ENCODE measurements at regions of chr11 and their contacts with region 1.

Region 1: DNA sequence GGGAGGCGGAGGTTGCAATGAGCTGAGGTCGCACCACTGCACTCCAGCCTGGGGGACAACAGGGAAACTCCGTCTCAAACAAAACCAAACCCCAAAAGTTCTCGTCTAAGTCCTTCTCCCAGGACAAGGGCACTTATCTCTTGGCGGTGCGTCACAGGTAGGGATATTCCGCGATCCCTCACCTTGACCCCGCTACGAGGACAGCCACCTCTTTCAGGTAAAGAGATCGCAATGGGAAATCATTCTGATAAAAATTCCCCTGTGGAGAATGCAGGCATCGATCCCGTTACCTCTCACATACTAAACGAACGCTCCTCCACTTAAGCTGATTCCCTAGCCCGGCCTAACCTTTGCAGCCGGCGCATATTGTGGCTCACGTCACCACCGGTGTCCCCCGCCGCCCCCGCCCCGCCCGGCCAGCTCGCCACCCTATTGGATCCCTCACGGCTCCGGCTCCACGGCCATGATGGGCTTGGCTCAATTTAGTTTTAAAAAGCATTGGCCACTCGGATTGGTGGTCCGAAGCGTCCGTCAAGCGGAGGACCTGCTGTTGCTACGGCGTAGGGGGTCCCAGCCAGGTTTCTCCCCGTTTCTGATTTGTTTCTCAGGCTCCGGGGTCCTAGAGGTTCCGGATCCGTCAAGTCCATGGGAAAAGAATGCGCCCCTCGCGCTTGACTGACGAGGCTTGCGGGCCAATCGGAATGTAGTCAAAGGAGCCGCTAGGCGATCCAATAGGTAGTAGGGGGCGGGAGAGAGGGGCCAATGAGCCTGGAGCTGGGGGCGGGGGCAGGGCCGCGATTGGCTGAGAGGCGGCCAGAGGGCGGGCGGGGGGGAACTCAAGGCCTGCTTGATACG is 439 bp upstream of the PPP6R3 start:
- DNase-seq: peak; percentile 97 to 99 (median 98)
- ATAC-seq: peak; percentile 93 to 96 (median 94)
- H3K4me3 ChIP-seq: peak overlapping the region; percentile 71 to 99 (median 94)
- H3K27ac ChIP-seq: peak overlapping the region; percentile 91 to 99 (median 96)
- H3K4me1 ChIP-seq: peaks cover 2 to 42% (median 36%) of the 10 kb centered on the region in 12 donors
- H3K27me3 ChIP-seq: no peaks in the 10 kb centered on the region
- CTCF ChIP-seq: no peak
- POLR2A ChIP-seq: no peak

Region 2: GRCh38 chr11:68297812-68298658 is 162.1 kb before region 1 on chr11:
- intact Hi-C with region 1: loop called in 1 of 10 experiments (anchors 5 kb)
- DNase-seq: peak; percentile 77 to 92 (median 80)
- ATAC-seq: peak; percentile 93 to 97 (median 96)
- H3K4me3 ChIP-seq: peak overlapping the region in 5 of 12 donors; percentile 3 to 28 (median 10)
- H3K27ac ChIP-seq: no peak overlapping the region
- H3K4me1 ChIP-seq: peaks cover 0 to 22% (median 12%) of the 10 kb centered on the region in 12 donors
- H3K27me3 ChIP-seq: no peaks in the 10 kb centered on the region
- CTCF ChIP-seq: peak in 11 of 12 donors; percentile 94 to 99 (median 98)
- POLR2A ChIP-seq: no peak

Region 3: GRCh38 chr11:68506908-68507307 is 46.8 kb after region 1 on chr11:
- intact Hi-C with region 1: loop called in 2 of 10 experiments (anchors 5 kb)
- DNase-seq: no peak
- ATAC-seq: no peak
- H3K4me3 ChIP-seq: no peak overlapping the region
- H3K27ac ChIP-seq: no peak overlapping the region
- H3K4me1 ChIP-seq: peaks cover 0 to 85% (median 73%) of the 10 kb centered on the region in 12 donors
- H3K27me3 ChIP-seq: no peaks in the 10 kb centered on the region
- CTCF ChIP-seq: peak in 1 of 12 donors; percentile 5
- POLR2A ChIP-seq: no peak

Region 4: GRCh38 chr11:68528630-68529029 is 68.5 kb after region 1 on chr11:
- intact Hi-C with region 1: loop called in 3 of 10 experiments (anchors 5 to 10 kb)
- DNase-seq: no peak
- ATAC-seq: peak; percentile 35 to 45 (median 39)
- H3K4me3 ChIP-seq: no peak overlapping the region
- H3K27ac ChIP-seq: peak overlapping the region in 3 of 12 donors; percentile 3 to 33 (median 8)
- H3K4me1 ChIP-seq: peaks cover 0 to 84% (median 48%) of the 10 kb centered on the region in 12 donors
- H3K27me3 ChIP-seq: no peaks in the 10 kb centered on the region
- CTCF ChIP-seq: no peak
- POLR2A ChIP-seq: no peak

Region 5: GRCh38 chr11:68542617-68543016 is 82.5 kb after region 1 on chr11:
- intact Hi-C with region 1: loop called in 3 of 10 experiments (anchors 5 to 10 kb)
- DNase-seq: no peak
- ATAC-seq: no peak
- H3K4me3 ChIP-seq: no peak overlapping the region
- H3K27ac ChIP-seq: peak overlapping the region in 2 of 12 donors; percentile 3 to 64
- H3K4me1 ChIP-seq: peaks cover 3 to 62% (median 30%) of the 10 kb centered on the region in 12 donors
- H3K27me3 ChIP-seq: no peaks in the 10 kb centered on the region
- CTCF ChIP-seq: no peak
- POLR2A ChIP-seq: no peak

Region 6: DNA sequence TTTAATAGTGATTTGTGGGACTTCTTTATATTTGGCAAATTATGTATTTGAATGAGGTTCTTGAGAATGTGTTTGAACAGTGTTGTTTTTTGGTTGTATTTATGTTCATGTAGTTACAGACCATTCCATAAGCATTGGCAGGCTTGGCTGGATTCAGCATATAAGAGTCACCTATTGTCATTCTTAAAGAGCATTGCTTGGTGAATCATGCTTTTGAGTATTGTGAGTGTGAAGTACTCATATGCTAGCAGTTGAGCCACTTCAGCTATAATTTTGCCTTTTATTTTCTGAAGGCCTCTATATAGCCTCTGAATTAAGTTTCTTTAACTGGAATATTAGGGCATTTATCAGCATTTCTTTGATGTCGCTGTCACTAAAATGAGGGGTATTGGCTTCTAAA is 114.2 kb after region 1 on chr11:
- intact Hi-C with region 1: loop called in 2 of 10 experiments (anchors 10 kb)
- DNase-seq: no peak
- ATAC-seq: no peak
- H3K4me3 ChIP-seq: no peak overlapping the region
- H3K27ac ChIP-seq: no peak overlapping the region
- H3K4me1 ChIP-seq: peaks cover 0 to 33% (median 10%) of the 10 kb centered on the region in 12 donors
- H3K27me3 ChIP-seq: no peaks in the 10 kb centered on the region
- CTCF ChIP-seq: no peak
- POLR2A ChIP-seq: no peak

Region 7: DNA sequence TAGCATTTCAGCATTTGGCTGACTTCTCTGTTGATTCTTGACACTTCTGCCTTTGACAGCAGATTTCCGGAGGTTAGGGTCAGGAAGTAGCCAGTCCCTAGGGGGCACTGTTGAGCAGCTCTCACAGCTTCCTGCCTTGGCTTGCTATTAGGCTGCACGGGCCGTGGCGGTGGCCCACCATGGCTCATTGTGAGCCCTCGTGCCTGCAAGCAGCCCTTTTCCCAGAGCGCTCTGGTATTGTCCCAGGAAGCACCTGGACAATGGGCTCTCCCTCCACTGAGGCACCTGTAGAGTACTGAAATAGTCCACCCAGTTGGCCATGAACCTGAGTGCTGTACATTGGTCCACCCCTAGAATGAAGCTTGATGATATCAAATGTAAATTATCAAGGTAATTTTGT is 124.0 kb after region 1 on chr11:
- intact Hi-C with region 1: loop called in 7 of 10 experiments (anchors 5 to 10 kb)
- DNase-seq: peak; percentile 44 to 65 (median 48)
- ATAC-seq: peak in 2 of 4 donors; percentile 2 to 25
- H3K4me3 ChIP-seq: no peak overlapping the region
- H3K27ac ChIP-seq: peak overlapping the region in 10 of 12 donors; percentile 6 to 86 (median 76)
- H3K4me1 ChIP-seq: peaks cover 0 to 73% (median 32%) of the 10 kb centered on the region in 12 donors
- H3K27me3 ChIP-seq: no peaks in the 10 kb centered on the region
- CTCF ChIP-seq: peak in 11 of 12 donors; percentile 33 to 71 (median 56)
- POLR2A ChIP-seq: no peak

Measured in heart left ventricle (tissue), 16 donors.